ENCODE measurements at regions of chr10 and their contacts with region 1.

Region 1: GRCh38 chr10:59625721-59626522 is 83.7 kb downstream of the SLC16A9 start:
- DNase-seq: peak; percentile 73
- H3K4me3 ChIP-seq: peak overlapping the region; percentile 15 to 37; a peak in 3 of 4 replicates
- H3K27ac ChIP-seq: peak overlapping the region; percentile 31 to 86; a peak in 3 of 4 replicates
- H3K4me1 ChIP-seq: peaks cover 0 to 2% of the 10 kb centered on the region in 2 experiments; a peak in 1 of 4 replicates
- H3K27me3 ChIP-seq: no peaks in the 10 kb centered on the region
- CTCF ChIP-seq: peak; percentile 92
- EP300 ChIP-seq: peak; percentile 45 to 71; a peak in 2 of 4 replicates
- RAD21 ChIP-seq: peak; percentile 98

Region 2: DNA sequence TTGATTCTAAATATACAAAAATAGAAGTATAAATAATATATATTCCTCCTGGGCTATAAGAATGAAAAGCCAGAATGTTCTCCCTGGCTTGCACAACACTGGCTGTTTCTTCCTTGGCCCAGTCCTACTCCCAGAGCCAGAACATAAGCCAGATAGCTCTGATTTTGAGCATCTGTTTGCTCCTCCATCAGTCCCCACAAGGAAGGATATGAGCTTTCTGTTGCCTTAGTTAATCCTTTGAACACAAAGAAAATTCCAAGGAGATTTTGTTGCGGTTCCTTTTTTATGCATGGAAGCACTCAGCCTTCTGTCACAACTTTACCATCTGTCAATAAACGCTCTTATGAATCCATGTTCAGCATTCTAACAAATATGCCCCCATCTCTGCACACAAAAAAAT is 1720.1 kb before region 1 on chr10:
- CTCF ChIA-PET with region 1: no interaction called
- POLR2A ChIA-PET with region 1: no interaction called
- DNase-seq: no peak
- H3K4me3 ChIP-seq: no peak overlapping the region
- H3K27ac ChIP-seq: no peak overlapping the region
- H3K4me1 ChIP-seq: no peaks in the 10 kb centered on the region
- H3K27me3 ChIP-seq: no peaks in the 10 kb centered on the region
- CTCF ChIP-seq: no peak
- EP300 ChIP-seq: no peak
- RAD21 ChIP-seq: no peak

Region 3: DNA sequence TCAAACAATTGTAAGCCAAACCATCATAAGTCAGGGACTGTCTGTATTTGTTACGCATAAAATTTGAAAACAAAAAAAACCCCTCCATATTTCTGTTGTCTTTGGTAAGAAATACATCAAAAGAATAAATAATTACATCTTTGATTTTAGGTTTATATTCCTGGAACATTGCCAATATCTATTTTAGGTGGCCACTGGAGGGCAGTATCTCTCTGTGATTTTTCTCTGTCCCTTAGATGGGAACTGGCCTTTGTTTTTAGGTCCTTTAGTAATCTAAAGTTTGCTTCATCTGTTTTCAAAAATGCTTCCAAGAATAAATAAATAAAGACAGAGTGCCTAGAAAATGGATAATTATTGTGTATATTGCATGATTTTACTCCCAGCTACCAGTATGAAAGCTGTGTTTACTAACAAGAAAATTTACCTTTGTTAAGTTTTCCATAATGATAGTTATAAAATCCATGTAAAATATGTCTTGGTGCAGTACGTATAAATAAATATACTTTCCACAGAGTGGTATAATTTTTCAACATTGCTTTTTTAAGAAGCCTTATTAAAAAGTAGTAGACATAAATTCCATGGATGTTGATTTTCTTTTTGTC is 385.2 kb before region 1 on chr10:
- CTCF ChIA-PET with region 1: interaction called, 19 read pairs
- POLR2A ChIA-PET with region 1: no interaction called
- DNase-seq: peak; percentile 23
- H3K4me3 ChIP-seq: no peak overlapping the region
- H3K27ac ChIP-seq: no peak overlapping the region; a peak in 1 of 4 replicates
- H3K4me1 ChIP-seq: no peaks in the 10 kb centered on the region; a peak in 1 of 4 replicates
- H3K27me3 ChIP-seq: no peaks in the 10 kb centered on the region
- CTCF ChIP-seq: peak; percentile 77
- EP300 ChIP-seq: no peak
- RAD21 ChIP-seq: peak; percentile 83

Region 4: DNA sequence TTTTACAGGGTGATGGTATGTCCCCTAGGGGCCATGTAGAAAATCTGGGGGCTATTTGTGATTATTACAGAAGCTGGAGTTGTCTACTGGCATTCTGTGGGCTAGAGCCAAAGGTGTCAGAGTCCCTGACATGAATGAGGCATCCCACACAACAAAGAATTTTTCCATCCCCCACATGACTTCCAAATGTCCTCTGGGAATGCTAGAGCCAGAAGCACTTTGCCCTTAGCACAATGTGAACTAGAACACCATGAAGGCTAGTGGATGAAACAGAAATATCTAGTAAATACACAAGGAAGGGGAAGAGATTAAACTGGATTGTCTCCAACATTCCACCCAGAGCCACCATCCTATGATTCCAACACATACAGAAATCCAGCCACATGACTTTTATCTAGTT is 310.5 kb before region 1 on chr10:
- CTCF ChIA-PET with region 1: no interaction called
- POLR2A ChIA-PET with region 1: no interaction called
- DNase-seq: no peak
- H3K4me3 ChIP-seq: no peak overlapping the region
- H3K27ac ChIP-seq: no peak overlapping the region
- H3K4me1 ChIP-seq: no peaks in the 10 kb centered on the region
- H3K27me3 ChIP-seq: no peaks in the 10 kb centered on the region
- CTCF ChIP-seq: no peak
- EP300 ChIP-seq: no peak
- RAD21 ChIP-seq: no peak

Region 5: GRCh38 chr10:59499460-59499859 is 126.5 kb before region 1 on chr10:
- CTCF ChIA-PET with region 1: no interaction called
- POLR2A ChIA-PET with region 1: no interaction called
- DNase-seq: no peak
- H3K4me3 ChIP-seq: no peak overlapping the region
- H3K27ac ChIP-seq: no peak overlapping the region
- H3K4me1 ChIP-seq: no peaks in the 10 kb centered on the region
- H3K27me3 ChIP-seq: no peaks in the 10 kb centered on the region
- CTCF ChIP-seq: no peak
- EP300 ChIP-seq: no peak
- RAD21 ChIP-seq: no peak

Region 6: DNA sequence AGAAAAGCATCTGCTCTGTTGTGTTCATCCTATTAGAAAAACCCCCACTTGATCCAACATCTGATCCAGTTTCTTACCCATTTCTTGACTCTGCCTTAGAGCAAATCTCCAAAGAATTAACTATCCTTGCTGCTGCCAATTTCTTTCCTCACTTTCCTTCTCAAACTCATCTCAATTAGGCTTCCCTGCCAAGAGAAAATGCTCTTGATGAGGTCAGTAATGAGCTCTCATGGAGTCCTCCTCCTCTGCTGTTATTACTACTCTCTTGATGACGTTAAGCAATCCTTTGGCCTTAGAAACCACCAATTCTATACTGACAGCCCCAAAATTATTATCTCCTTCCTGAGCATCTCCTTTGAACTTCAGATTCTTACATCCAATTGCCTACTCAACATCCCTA is 101.6 kb before region 1 on chr10:
- CTCF ChIA-PET with region 1: no interaction called
- POLR2A ChIA-PET with region 1: no interaction called
- DNase-seq: no peak
- H3K4me3 ChIP-seq: no peak overlapping the region
- H3K27ac ChIP-seq: no peak overlapping the region
- H3K4me1 ChIP-seq: no peaks in the 10 kb centered on the region
- H3K27me3 ChIP-seq: no peaks in the 10 kb centered on the region
- CTCF ChIP-seq: no peak
- EP300 ChIP-seq: no peak
- RAD21 ChIP-seq: no peak

Region 7: GRCh38 chr10:59580026-59580863 is 45.7 kb before region 1 on chr10:
- CTCF ChIA-PET with region 1: interaction called, 13 read pairs
- POLR2A ChIA-PET with region 1: no interaction called
- DNase-seq: peak; percentile 45
- H3K4me3 ChIP-seq: no peak overlapping the region
- H3K27ac ChIP-seq: no peak overlapping the region
- H3K4me1 ChIP-seq: peaks cover 13 to 15% of the 10 kb centered on the region in 2 experiments; a peak in 3 of 4 replicates
- H3K27me3 ChIP-seq: no peaks in the 10 kb centered on the region
- CTCF ChIP-seq: peak; percentile 83
- EP300 ChIP-seq: no peak
- RAD21 ChIP-seq: peak; percentile 91

Region 8: DNA sequence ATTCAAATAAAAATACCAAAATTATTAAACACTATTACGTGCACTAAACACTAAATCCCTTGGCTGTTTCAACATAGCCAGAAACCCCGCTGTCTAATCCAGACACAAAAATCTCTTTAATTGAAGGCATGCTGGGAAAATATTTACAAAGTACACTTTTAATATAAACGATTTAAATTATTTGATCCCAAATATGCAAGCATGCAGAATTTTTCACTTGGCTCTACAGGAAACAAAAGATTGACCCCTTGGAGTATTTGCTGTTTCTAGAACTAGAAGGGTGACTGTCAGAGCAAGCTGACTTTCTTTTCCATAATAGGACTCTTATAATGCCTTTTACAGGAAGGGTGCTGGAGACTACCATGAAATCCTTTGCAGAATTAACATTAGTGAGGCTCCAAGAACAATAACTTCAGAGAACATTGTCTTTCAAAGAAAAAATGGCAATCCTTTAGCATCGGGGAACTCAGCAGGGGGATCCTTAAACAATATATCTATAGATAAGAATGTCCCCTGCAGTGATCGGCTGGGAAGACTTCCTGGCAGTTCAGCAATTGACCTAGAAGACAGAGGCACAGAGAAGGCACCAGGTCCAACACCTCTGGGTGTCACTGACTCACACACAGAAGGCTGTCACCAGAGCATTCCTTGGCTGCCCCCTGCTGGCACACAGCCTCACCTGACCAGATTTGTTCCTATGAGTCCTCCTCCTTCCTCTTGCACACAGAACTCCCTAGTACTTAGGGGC is 183.1 kb after region 1 on chr10:
- CTCF ChIA-PET with region 1: interaction called, 56 read pairs
- POLR2A ChIA-PET with region 1: no interaction called
- DNase-seq: peak; percentile 54
- H3K4me3 ChIP-seq: no peak overlapping the region; a peak in 1 of 4 replicates
- H3K27ac ChIP-seq: no peak overlapping the region
- H3K4me1 ChIP-seq: no peaks in the 10 kb centered on the region
- H3K27me3 ChIP-seq: no peaks in the 10 kb centered on the region
- CTCF ChIP-seq: peak; percentile 77
- EP300 ChIP-seq: no peak
- RAD21 ChIP-seq: peak; percentile 88

Region 9: DNA sequence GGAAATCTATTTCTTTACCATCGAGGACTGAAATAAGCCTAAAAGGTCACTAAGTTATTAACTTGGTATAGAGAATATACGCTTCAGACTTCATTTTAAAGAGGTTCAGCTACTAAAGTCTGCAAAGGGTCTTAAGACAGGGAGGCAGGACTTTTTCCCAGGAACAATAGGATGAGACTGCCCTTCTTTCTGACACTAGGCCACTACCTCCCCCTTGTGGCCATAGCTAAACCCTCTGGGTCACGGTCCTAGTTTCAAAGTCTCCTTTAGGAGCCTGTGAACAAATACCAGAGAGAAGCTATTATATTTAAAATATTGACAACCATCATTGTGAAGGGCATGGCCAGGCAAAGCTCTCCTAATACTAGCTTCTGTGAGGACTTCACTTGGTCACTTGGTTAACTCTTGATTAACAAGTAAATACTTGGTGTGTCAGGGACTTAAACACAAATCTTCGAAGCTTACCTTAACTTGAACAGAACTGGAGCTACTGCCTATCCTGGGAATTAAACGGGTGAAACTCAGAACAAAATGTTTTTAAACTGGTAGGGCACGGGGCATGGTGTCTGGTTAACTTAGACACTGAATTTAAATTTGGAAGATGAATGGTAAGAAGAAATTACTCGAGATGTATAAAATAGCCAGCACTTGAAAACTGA is 204.8 kb after region 1 on chr10:
- CTCF ChIA-PET with region 1: interaction called, 85 read pairs
- POLR2A ChIA-PET with region 1: no interaction called
- DNase-seq: peak; percentile 59
- H3K4me3 ChIP-seq: no peak overlapping the region; a peak in 1 of 4 replicates
- H3K27ac ChIP-seq: no peak overlapping the region
- H3K4me1 ChIP-seq: no peaks in the 10 kb centered on the region; a peak in 1 of 4 replicates
- H3K27me3 ChIP-seq: no peaks in the 10 kb centered on the region
- CTCF ChIP-seq: peak; percentile 90
- EP300 ChIP-seq: no peak
- RAD21 ChIP-seq: peak; percentile 76